MCF 10A (cell line): ENCODE measurements at regions of chr12 and their contacts with region 1.

Region 1: DNA sequence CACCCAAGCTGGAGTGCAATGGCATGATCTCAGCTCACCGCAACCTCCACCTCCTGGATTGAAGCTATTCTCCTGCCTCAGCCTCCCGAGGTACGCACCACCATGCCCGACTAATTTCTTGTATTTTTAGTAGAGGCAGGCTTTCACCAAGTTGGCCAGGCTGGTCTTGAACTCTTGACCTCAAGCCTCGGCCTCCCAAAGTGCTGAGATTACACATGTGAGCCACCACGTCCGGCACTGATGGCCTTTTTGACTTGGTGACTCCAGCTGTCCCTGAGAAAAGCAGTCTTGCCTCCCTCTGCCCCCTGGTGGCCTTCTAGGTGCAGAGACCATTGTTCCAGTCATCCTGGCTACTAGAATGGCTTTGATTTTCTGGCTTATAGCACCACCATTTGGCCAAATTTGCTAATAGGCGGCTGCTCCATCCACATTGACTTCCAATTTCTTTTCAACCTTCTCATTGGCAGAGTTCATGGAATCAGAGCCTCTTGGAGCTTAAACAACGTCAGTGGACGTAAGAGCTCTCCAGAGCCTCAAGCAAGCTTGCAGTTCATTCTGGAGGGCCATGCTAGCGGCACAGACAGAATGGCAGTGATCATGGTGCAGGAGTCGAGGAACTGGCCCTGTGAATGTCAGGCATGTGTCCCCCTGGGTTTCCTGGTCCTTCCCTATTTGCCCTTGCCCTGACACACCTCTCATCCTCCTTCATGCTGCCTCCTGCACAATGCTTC is 25.4 kb upstream of the EIF4B start:
- DNase-seq: peak; percentile 96
- H3K4me3 Mint-ChIP-seq: no peak overlapping the region
- H3K27ac Mint-ChIP-seq: no peak overlapping the region
- H3K4me1 Mint-ChIP-seq: peaks cover 7% of the 10 kb centered on the region
- H3K27me3 Mint-ChIP-seq: no peaks in the 10 kb centered on the region
- CTCF ChIP-seq: peak; percentile 95

Region 2: GRCh38 chr12:52139552-52140062 is 841.3 kb before region 1 on chr12:
- CTCF ChIA-PET with region 1: interaction called, 21 read pairs
- POLR2A ChIA-PET with region 1: interaction called, 3 read pairs
- intact Hi-C with region 1: no loop called
- DNase-seq: peak; percentile 75
- H3K4me3 Mint-ChIP-seq: no peak overlapping the region
- H3K27ac Mint-ChIP-seq: no peak overlapping the region
- H3K4me1 Mint-ChIP-seq: peaks cover 25% of the 10 kb centered on the region
- H3K27me3 Mint-ChIP-seq: no peaks in the 10 kb centered on the region
- CTCF ChIP-seq: peak; percentile 97

Region 3: DNA sequence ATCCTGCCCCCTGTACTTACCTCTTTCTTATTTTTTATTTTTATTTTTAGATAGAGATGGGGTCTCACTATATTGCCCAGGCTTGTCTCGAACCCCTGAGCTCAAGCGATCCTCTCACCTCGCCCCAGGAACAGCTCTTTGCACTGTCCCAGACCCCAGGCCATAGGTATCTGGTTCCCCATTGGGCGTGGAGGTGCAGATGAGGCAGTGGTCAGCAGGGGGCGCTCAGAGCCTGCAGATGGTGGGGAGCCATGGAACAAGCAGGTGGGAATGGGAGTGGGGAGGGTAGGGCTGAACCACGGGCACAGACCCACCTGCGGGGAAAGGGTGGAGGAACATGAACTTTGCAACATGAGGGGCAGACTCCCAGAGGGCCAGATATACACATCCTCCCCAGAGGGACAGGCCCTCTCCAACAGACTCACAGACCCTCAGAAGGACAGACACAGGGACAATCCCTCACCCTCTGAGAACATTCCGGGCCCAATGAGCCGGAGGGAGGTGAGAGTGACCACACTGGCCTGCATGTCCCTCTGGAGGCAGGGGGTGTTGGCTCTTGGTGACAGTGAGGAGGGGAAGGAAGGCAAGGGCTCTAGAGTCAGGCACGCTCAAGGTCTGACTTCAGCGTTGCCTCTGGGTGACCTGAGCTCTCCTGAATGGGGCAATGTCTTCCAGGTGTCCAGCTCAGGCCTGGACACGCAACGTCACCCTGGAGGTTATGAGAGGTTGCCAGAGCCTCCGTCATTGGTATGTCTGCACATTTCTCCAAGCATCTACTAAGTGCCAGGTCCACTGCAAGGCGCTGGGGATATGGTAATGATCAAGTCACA is 823.9 kb before region 1 on chr12:
- CTCF ChIA-PET with region 1: interaction called, 4 read pairs
- POLR2A ChIA-PET with region 1: no interaction called
- intact Hi-C with region 1: loop called (anchors 5 kb)
- DNase-seq: peak; percentile 85
- H3K4me3 Mint-ChIP-seq: no peak overlapping the region
- H3K27ac Mint-ChIP-seq: peak overlapping the region; percentile 91
- H3K4me1 Mint-ChIP-seq: peaks cover 30% of the 10 kb centered on the region
- H3K27me3 Mint-ChIP-seq: no peaks in the 10 kb centered on the region
- CTCF ChIP-seq: peak; percentile 98

Region 4: DNA sequence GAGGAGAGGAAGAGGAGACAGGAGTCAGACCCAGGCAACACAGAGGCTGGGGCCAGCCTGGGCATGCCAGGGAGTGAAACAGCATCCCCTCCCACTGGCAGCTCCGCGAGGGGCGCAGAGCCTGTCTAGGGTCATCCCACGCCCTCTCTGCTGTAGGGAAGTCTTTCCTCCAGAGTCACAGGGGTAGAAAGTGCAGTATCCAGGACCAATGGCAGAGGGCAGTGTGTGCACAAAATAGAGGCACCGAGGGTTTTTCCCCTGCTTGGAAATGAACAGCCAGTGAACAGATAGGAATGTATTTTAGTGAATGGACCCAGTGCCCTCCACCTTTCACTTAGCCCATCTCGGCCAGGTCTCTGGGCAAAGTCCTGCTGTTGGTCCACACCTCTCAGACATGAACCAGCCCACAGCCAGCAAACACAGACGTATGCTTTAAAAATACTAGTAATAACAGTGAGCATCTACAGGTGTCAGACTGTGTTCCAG is 397.8 kb before region 1 on chr12:
- CTCF ChIA-PET with region 1: interaction called, 6 read pairs
- POLR2A ChIA-PET with region 1: interaction called, 4 read pairs
- intact Hi-C with region 1: loop called (anchors 2 kb)
- DNase-seq: peak; percentile 82
- H3K4me3 Mint-ChIP-seq: no peak overlapping the region
- H3K27ac Mint-ChIP-seq: no peak overlapping the region
- H3K4me1 Mint-ChIP-seq: peaks cover 26% of the 10 kb centered on the region
- H3K27me3 Mint-ChIP-seq: no peaks in the 10 kb centered on the region
- CTCF ChIP-seq: peak; percentile 76

Region 5: DNA sequence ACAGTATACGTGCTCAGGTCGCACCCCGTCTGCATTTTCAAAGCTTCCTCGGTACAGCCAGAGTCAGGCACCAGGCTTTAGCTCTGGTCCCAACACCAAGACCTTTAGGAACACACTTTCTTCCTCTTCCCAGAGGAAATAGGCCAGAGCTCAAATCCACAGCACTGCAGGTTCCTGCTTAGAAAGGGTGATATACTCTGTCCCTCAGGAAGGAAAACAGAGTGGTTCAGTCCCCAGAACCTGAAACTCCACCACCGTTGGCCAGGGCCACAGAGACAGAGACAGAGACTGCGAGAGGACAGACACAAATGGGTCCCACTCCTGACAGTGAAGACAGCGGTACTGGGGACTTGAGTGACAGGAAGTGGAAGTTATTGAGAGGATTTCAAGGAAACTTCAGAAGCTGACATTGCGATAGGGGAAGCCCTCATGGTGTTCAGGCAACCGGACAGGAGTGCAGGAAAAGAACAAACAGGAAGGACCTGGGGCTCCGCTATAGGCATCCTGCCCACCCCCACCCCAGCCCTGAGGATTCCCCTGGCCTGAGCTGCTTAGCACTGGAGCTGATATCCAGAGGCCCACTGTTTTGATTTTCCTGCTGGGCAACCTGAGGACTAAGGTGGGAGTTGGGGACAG is 70.5 kb before region 1 on chr12:
- CTCF ChIA-PET with region 1: interaction called, 48 read pairs
- POLR2A ChIA-PET with region 1: interaction called, 15 read pairs
- intact Hi-C with region 1: loop called (anchors 1 kb)
- DNase-seq: no peak
- H3K4me3 Mint-ChIP-seq: no peak overlapping the region
- H3K27ac Mint-ChIP-seq: no peak overlapping the region
- H3K4me1 Mint-ChIP-seq: peaks cover 30% of the 10 kb centered on the region
- H3K27me3 Mint-ChIP-seq: peaks cover under 1% of the 10 kb centered on the region
- CTCF ChIP-seq: no peak

Region 6: DNA sequence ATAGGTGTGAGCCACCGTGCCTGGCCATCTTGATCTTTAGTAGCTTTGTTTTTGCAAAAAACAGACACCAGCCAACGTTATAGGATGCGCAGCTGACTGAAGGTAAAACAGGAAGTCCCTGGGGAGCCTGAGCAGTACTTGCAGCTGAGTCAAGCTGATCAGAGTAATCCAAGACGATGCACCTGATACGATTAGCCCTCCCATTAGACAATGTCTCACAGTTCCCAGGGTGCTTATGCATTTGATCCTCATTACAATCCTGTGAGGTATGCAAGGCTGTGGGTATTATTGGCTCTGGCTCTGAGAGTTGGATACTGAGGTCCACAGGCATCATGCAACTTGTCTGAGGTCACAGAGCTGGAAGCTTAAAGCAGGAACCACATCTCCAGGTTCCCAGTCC is 23.9 kb before region 1 on chr12:
- CTCF ChIA-PET with region 1: interaction called, 28 read pairs
- POLR2A ChIA-PET with region 1: interaction called, 3 read pairs
- intact Hi-C with region 1: no loop called
- DNase-seq: no peak
- H3K4me3 Mint-ChIP-seq: no peak overlapping the region
- H3K27ac Mint-ChIP-seq: no peak overlapping the region
- H3K4me1 Mint-ChIP-seq: peaks cover 2% of the 10 kb centered on the region
- H3K27me3 Mint-ChIP-seq: no peaks in the 10 kb centered on the region
- CTCF ChIP-seq: no peak

Region 7: GRCh38 chr12:52992699-52993557 is 12.1 kb after region 1 on chr12:
- CTCF ChIA-PET with region 1: interaction called, 29 read pairs
- POLR2A ChIA-PET with region 1: no interaction called
- intact Hi-C with region 1: no loop called
- DNase-seq: peak; percentile 43
- H3K4me3 Mint-ChIP-seq: no peak overlapping the region
- H3K27ac Mint-ChIP-seq: no peak overlapping the region
- H3K4me1 Mint-ChIP-seq: peaks cover 8% of the 10 kb centered on the region
- H3K27me3 Mint-ChIP-seq: no peaks in the 10 kb centered on the region
- CTCF ChIP-seq: no peak